ENCODE measurements at regions of chr5 and their contacts with region 1.

Region 1: GRCh38 chr5:108260117-108260857 is 121.6 kb downstream of the FBXL17 start:
- DNase-seq: peak; percentile 17
- H3K4me3 ChIP-seq: peak overlapping the region; percentile 6; the same call in 1 of the 2 replicates
- H3K27me3 ChIP-seq: no peaks in the 10 kb centered on the region
- CTCF ChIP-seq: peak; percentile 97

Region 2: DNA sequence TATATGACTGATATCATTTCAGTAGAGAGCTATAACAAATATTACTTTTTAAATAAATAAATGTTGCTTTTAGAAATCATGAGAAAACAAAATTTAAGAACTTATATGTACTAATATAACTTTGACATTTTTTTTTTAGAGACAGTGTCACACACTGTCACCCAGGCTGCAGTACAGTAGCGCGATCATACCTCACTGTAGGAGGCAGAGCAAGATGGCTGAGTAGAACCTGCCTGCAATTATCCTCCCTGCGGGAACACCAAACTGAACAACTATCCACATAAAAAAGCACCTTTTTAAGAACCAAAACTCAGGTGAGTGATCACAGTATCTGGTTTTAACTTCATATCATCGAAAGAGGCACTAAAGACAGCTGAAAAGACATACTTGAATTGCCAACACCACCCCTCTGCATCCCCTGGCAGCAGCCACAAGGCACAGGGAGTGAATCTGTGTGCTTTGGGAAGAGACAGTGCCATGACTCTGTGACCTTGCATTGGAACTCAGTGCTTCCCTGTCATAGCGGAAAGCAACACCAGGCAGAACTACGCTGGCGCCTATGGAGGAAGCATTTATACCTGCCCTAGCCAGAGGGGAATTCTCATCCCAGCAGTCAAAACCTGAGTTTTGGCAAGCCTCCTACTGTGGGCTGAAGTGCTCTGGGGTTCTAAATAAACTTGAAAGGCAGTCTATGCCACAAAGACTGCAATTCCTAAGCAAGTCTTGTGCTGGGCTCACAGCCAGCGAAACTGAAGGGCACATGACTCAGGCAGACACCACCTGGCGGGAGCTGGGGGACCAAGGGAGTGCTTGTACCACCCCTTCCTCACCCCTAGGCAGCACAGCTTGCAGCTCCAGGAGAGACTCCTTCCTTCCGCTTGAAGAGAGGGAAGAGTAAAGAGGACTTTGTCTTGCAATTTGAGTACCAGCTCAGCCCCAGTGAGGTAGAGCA is 21.1 kb before region 1 on chr5:
- CTCF ChIA-PET with region 1: interaction called, 13 read pairs
- POLR2A ChIA-PET with region 1: no interaction called
- DNase-seq: no peak
- H3K4me3 ChIP-seq: no peak overlapping the region
- H3K27me3 ChIP-seq: no peaks in the 10 kb centered on the region
- CTCF ChIP-seq: no peak

Region 3: GRCh38 chr5:108271127-108271526 is 10.8 kb after region 1 on chr5:
- CTCF ChIA-PET with region 1: interaction called, 18 read pairs
- POLR2A ChIA-PET with region 1: no interaction called
- DNase-seq: no peak
- H3K4me3 ChIP-seq: no peak overlapping the region
- H3K27me3 ChIP-seq: no peaks in the 10 kb centered on the region
- CTCF ChIP-seq: no peak

Region 4: DNA sequence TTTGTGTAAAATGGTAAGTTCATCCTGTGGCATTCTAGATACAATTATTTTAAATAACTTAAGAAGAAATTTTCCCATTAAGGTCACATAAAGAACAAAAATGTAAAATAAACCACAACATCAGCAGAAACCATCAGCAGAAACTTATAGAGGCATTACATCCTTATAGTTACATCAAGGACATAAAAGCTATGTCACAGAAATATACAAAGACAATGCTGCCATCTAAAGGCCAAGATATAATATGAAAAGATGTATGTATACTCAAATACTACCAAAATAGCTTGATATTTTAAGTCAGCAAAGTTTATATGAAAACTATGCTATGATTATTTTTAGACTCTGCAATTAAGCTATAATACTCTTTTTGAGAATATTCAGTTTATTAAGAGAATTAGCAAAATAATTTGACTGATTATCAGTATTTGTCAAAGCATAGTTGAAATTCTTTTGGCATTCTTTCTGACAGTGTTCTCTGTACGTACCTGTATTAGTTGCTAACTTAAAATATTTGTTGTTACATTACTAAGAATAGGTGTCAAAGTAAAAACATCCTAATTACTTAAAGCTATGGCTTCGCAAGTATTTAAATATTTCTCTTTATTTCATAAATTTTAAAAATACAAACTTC is 85.4 kb after region 1 on chr5:
- CTCF ChIA-PET with region 1: interaction called, 60 read pairs
- POLR2A ChIA-PET with region 1: no interaction called
- DNase-seq: no peak
- H3K4me3 ChIP-seq: no peak overlapping the region
- H3K27me3 ChIP-seq: no peaks in the 10 kb centered on the region
- CTCF ChIP-seq: peak; percentile 24; the same call in 1 of the 2 replicates

Measured in BJ (cell line).